ENCODE measurements at regions of chr20 and their contacts with region 1.

Region 1: DNA sequence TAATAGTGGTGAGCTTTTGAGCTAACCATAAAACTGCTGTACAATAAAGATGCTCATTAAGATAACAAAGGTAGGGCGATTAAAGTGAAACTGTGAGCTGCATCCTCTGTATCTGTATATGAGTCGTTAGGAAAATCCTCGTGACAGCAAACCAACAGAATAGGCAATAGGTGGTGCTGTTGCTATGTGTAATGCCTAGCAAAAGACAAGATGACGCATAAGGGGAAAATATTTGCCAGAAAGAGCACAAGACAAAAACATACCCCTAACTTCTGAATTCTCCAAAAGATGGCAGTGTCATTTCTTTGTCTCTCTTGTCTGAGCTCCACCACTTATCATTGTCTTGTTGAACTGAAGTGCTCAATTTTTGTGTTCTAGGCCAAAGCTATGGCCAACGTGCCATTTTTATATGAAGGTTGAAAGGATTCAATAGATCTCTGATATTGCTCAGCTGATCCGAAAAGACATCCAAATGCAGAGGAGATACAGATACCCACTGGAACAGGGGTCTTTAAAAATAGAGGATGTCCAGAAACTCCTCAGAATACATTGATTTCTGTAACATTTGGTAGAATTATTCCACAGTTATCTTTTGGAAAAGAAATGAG is 56.3 kb upstream of the ANKEF1 start:
- DNase-seq: peak; percentile 92
- ATAC-seq: peak; percentile 92
- H3K4me3 ChIP-seq: peak overlapping the region; percentile 34; the same call in 1 of the 2 replicates
- H3K27ac ChIP-seq: no peak overlapping the region
- H3K4me1 ChIP-seq: no peaks in the 10 kb centered on the region
- H3K27me3 ChIP-seq: peaks cover 26% of the 10 kb centered on the region
- CTCF ChIP-seq: peak; percentile 98

Region 2: GRCh38 chr20:10090588-10091166 is 112.2 kb after region 1 on chr20:
- CTCF ChIA-PET with region 1: interaction called, 36 read pairs
- POLR2A ChIA-PET with region 1: no interaction called
- intact Hi-C with region 1: loop called (anchors 1 kb)
- DNase-seq: peak; percentile 81
- ATAC-seq: peak; percentile 84
- H3K4me3 ChIP-seq: no peak overlapping the region
- H3K27ac ChIP-seq: no peak overlapping the region
- H3K4me1 ChIP-seq: peaks cover 19% of the 10 kb centered on the region
- H3K27me3 ChIP-seq: peaks cover 2% of the 10 kb centered on the region; the same call in 1 of the 2 replicates
- CTCF ChIP-seq: peak; percentile 93

Region 3: DNA sequence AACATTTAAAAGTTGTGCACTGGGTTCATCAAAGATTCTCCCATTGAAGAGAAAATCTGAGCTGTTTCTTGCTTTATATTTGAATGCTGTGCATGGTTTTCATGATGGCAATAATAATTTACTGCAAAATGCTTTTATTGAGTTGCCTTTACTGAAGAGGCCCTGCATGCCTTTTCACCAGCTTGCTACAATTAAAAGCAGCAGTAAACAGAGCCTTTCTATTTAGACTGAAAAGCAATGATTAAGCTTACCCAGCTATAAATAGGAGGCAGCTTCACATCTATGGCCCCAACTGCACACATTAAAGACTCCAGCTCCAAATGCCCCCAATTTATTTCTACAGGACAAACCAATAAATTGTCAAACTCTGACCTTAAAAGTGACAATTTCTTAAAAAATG is 126.5 kb after region 1 on chr20:
- CTCF ChIA-PET with region 1: no interaction called
- POLR2A ChIA-PET with region 1: no interaction called
- intact Hi-C with region 1: no loop called
- DNase-seq: no peak
- ATAC-seq: no peak
- H3K4me3 ChIP-seq: no peak overlapping the region
- H3K27ac ChIP-seq: no peak overlapping the region
- H3K4me1 ChIP-seq: no peaks in the 10 kb centered on the region; the same call in 1 of the 2 replicates
- H3K27me3 ChIP-seq: no peaks in the 10 kb centered on the region
- CTCF ChIP-seq: no peak

Region 4: GRCh38 chr20:10225439-10226060 is 247.0 kb after region 1 on chr20:
- CTCF ChIA-PET with region 1: interaction called, 6 read pairs
- POLR2A ChIA-PET with region 1: no interaction called
- intact Hi-C with region 1: loop called (anchors 2 kb)
- DNase-seq: peak; percentile 23
- ATAC-seq: no peak
- H3K4me3 ChIP-seq: no peak overlapping the region
- H3K27ac ChIP-seq: no peak overlapping the region
- H3K4me1 ChIP-seq: no peaks in the 10 kb centered on the region
- H3K27me3 ChIP-seq: peaks cover 74% of the 10 kb centered on the region
- CTCF ChIP-seq: peak; percentile 54

Region 5: DNA sequence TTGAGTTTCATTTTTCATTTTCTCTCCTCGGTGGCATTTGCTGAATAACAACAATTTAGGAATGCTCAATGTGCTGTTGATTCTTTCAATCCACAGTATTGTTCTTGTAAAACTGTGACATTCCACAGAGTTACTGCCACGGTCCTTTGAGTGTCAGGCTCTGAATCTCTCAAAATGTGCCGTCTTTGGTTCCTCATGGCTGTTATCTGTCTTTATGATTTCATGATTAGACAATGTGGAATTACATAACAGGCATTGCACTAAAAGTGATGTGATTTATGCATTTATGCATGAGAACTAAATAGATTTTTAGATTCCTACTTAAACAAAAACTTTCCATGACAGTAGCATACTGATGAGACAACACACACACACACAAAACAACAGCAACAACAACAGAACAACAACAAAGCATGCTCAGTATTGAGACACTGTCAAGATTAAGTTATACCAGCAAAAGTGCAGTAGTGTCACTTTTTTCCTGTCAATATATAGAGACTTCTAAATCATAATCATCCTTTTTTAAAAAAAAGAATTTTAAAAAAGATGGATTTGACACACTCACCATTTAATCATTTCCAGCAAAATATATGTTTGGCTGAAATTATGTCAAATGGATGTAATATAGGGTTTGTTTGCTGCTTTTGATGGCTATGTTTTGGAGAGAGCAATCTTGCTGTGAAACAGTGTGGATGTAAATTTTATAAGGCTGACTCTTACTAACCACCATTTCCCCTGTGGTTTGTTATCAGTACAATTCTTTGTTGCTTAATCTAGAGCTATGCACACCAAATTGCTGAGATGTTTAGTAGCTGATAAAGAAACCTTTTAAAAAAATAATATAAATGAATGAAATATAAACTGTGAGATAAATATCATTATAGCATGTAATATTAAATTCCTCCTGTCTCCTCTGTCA is 328.2 kb after region 1 on chr20:
- CTCF ChIA-PET with region 1: no interaction called
- POLR2A ChIA-PET with region 1: no interaction called
- intact Hi-C with region 1: loop called (anchors 10 kb)
- DNase-seq: peak; percentile 85
- ATAC-seq: peak; percentile 77
- H3K4me3 ChIP-seq: no peak overlapping the region
- H3K27ac ChIP-seq: no peak overlapping the region
- H3K4me1 ChIP-seq: peaks cover 45% of the 10 kb centered on the region
- H3K27me3 ChIP-seq: peaks cover 3% of the 10 kb centered on the region; the same call in 1 of the 2 replicates
- CTCF ChIP-seq: no peak

Region 6: DNA sequence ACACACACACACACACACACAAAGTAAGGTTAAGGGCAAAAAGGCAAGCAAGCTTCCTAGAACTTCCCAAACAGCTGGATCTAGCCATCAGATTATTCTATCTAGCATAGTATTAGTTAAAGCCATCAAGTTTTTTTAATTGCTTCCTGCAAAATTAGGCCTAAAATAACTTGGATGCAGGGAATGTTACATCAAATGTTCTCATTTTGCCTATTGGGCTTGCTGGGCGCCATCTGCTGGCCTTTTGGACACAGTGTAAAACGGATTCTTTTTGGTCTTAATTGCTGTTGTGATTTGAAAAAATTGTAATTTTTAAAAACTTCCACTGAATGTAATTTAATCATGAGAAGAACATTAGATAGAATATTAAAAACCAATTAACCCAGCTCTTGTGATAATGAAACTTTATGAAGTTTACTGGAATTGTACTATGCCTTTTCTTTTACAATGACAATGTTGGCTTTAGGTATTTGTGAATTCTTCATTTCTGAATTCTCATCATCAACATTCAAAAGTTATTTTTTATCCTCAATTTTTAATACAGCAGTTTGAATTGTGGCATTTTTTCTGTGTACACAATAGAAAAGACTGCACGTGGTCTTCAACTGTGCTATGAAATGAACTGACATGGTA is 448.7 kb after region 1 on chr20:
- CTCF ChIA-PET with region 1: interaction called, 5 read pairs
- POLR2A ChIA-PET with region 1: no interaction called
- intact Hi-C with region 1: loop called (anchors 1 kb)
- DNase-seq: peak; percentile 67
- ATAC-seq: peak; percentile 60; the same call in 1 of the 2 replicates
- H3K4me3 ChIP-seq: no peak overlapping the region
- H3K27ac ChIP-seq: no peak overlapping the region
- H3K4me1 ChIP-seq: peaks cover 24% of the 10 kb centered on the region
- H3K27me3 ChIP-seq: no peaks in the 10 kb centered on the region
- CTCF ChIP-seq: peak; percentile 96

Region 7: DNA sequence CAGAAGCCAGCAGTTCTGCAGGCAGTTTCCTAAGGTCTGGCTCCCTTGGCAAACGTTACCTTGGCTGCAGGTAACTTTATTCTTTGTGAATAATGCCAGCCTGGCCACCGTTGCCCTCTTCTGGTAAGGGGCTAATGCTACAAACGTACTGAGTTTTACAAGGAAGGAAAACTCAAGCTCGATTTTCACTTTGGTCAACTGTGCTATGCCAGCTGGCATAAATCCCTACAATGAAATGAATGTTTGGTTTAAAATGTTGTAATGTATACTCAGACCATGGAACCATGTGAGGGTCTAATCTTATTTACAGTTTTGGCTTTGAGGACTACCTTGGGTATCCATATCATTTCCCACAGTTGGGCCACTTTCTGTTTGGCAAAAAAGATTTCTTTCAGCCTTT is 558.0 kb after region 1 on chr20:
- CTCF ChIA-PET with region 1: no interaction called
- POLR2A ChIA-PET with region 1: no interaction called
- intact Hi-C with region 1: loop called (anchors 2 kb)
- DNase-seq: peak; percentile 73
- ATAC-seq: peak; percentile 25
- H3K4me3 ChIP-seq: no peak overlapping the region
- H3K27ac ChIP-seq: peak overlapping the region; percentile 19
- H3K4me1 ChIP-seq: peaks cover 41% of the 10 kb centered on the region
- H3K27me3 ChIP-seq: no peaks in the 10 kb centered on the region
- CTCF ChIP-seq: peak; percentile 77

Region 8: DNA sequence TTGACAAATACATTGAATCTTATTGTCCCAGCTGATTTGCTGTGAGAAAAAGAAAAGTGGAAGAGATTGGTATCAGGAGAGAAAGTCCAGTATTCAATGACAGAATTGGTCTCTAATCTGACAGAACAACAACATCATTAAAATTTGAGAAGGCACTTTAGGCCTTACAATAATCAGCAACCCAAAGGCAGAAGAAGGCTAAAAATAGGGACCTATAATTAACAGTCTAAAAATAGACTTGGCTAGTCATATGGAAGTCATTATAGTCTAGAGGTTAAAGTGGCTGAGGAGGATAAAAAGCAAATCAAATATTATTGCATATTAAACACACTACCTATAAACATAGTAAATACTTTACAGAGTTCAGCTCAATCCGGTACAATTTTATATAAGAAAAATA is 1088.9 kb after region 1 on chr20:
- CTCF ChIA-PET with region 1: no interaction called
- POLR2A ChIA-PET with region 1: no interaction called
- intact Hi-C with region 1: no loop called
- DNase-seq: no peak
- ATAC-seq: no peak
- H3K4me3 ChIP-seq: no peak overlapping the region
- H3K27ac ChIP-seq: no peak overlapping the region
- H3K4me1 ChIP-seq: no peaks in the 10 kb centered on the region
- H3K27me3 ChIP-seq: no peaks in the 10 kb centered on the region
- CTCF ChIP-seq: no peak

Measured in PC-3 (cell line).